Activated CD4-positive, alpha-beta T cell treated with anti-CD3 and anti-CD28 coated beads for 36 hours (primary cell): ENCODE measurements at regions of chr11 and their contacts with region 1.

Region 1: GRCh38 chr11:116835791-116836631 is 1.4 kb downstream of the APOA1 start:
- DNase-seq: peak; percentile 90
- ATAC-seq: peak; percentile 95
- H3K4me3 Mint-ChIP-seq: peak overlapping the region; percentile 59
- H3K27ac Mint-ChIP-seq: peak overlapping the region; percentile 31
- H3K4me1 Mint-ChIP-seq: peaks cover 11% of the 10 kb centered on the region
- H3K27me3 Mint-ChIP-seq: peaks cover 3% of the 10 kb centered on the region

Region 2: DNA sequence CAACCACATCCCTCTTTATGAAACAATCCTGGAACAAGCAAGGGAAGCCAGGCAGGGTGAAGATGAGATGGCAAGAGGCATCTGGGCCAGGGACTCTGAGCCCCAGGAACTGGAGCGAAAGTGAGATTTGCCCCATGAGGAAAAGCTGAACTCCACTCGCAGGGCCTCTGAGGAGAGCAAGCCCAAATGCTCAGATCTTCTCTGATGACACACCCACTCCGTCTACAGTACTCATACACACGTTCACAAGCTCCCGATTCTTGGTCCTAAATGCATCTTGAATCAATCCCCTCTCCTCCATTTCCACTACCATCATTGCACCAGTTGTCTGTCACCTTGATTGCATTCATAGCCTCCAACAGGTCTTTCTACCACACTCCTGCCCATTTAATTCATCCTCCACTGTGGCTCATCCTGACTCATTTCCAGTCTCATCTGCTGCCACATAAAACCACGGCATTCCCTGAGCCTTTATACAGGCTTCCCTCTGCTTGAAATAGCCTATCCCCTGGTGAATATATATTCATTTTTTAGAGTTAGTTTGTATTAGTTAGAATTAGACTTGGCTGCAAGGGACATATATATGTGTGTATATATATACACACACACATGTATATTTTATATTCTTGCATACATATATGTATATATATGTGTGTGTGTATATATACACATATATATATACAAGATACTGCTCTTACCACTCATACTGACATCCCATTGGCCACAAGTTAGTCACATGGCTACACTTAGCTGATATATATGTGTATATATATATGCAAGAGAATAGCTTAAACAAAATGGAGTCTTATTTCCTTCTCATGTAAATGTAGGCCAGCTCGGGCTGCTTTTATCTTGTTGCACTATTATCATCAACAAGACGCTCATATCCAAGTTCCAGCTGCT is 42.9 kb before region 1 on chr11:
- CTCF ChIA-PET with region 1: interaction called, 89 read pairs
- POLR2A ChIA-PET with region 1: interaction called, 5 read pairs
- intact Hi-C with region 1: loop called (anchors 1 kb)
- DNase-seq: no peak
- ATAC-seq: no peak
- H3K4me3 Mint-ChIP-seq: no peak overlapping the region
- H3K27ac Mint-ChIP-seq: no peak overlapping the region
- H3K4me1 Mint-ChIP-seq: peaks cover 11% of the 10 kb centered on the region
- H3K27me3 Mint-ChIP-seq: no peaks in the 10 kb centered on the region

Region 3: GRCh38 chr11:116847612-116848011 is 11.6 kb after region 1 on chr11:
- CTCF ChIA-PET with region 1: interaction called, 25 read pairs
- POLR2A ChIA-PET with region 1: interaction called, 3 read pairs
- intact Hi-C with region 1: no loop called
- DNase-seq: no peak
- ATAC-seq: no peak
- H3K4me3 Mint-ChIP-seq: no peak overlapping the region
- H3K27ac Mint-ChIP-seq: no peak overlapping the region
- H3K4me1 Mint-ChIP-seq: peaks cover 27% of the 10 kb centered on the region
- H3K27me3 Mint-ChIP-seq: no peaks in the 10 kb centered on the region